Head of caudate nucleus (tissue), 42 donors: ENCODE measurements at regions of chr1 and their contacts with region 1.

Region 1: GRCh38 chr1:180178511-180179161 is 24.0 kb downstream of the QSOX1 start:
- DNase-seq: peak; percentile 40 to 90 (median 76)

Region 2: GRCh38 chr1:179706339-179706941 is 472.2 kb before region 1 on chr1:
- intact Hi-C with region 1: loop called (anchors 10 kb)
- DNase-seq: peak in 40 of 42 donors; percentile 5 to 86 (median 63)

Region 3: DNA sequence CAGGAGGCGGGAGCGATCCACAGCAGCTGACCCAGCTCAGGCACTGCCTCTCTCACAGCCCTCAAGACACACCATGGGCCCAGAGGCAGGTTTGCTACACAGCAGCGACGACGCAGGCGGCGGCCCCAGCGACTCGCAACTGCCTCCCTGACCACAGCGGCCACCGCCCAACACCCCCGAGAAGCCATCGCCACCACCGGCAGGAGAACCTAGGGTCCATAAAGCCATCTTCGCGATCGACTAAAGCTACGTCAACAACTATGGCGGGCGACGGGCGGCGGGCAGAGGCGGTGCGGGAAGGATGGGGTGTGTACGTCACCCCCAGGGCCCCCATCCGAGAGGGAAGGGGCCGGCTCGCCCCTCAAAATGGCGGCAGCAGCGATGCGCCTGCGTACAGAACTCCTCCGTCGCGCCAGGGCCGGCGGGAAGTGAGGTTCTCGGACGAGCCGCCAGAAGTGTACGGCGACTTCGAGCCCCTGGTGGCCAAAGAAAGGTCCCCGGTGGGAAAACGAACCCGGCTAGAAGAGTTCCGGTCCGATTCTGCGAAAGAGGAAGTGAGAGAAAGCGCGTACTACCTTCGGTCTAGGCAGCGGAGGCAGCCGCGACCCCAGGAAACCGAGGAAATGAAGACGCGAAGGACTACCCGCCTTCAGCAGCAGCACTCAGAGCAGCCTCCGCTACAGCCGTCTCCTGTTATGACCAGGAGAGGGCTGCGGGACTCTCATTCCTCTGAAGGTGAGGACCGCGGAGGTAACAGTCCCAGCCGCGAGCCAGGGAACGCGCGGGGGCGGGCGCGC is 296.2 kb before region 1 on chr1 and contains the start of gene TOR1AIP1:
- intact Hi-C with region 1: loop called (anchors 10 kb)
- DNase-seq: peak; percentile 88 to 99 (median 97)

Region 4: GRCh38 chr1:179954493-179955297 is 223.9 kb before region 1 on chr1 and contains the start of gene CEP350:
- intact Hi-C with region 1: loop called (anchors 10 kb)
- DNase-seq: peak; percentile 91 to 99 (median 96)

Region 5: GRCh38 chr1:180231506-180231921 is 52.9 kb after region 1 on chr1:
- intact Hi-C with region 1: no loop called
- DNase-seq: no peak